Heart left ventricle (tissue), 16 donors: ENCODE measurements at regions of chr15 and their contacts with region 1.

Region 1: DNA sequence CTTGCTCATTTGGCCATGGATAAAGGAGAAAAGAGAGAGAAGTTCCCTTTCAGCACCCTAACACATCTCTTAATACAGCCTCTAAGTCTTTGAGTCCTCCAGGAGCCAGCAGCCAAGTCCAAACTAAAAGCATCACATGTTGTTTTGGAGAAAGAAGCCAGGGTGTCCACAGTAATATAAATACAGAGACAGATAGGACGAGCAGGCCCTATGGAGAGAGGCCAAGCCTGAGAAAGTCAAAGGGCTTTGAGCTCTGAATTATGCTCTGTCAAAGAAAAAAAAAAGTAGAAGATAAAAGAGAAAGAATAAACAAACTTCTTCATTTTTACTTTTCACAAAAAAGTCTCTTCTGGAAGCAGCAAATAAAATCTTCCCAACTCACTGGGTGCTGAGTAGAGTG is 92.4 kb upstream of the THBS1 start:
- DNase-seq: peak in 3 of 5 donors; percentile 50 to 61 (median 56)
- ATAC-seq: peak; percentile 52 to 83 (median 71)
- H3K4me3 ChIP-seq: no peak overlapping the region
- H3K27ac ChIP-seq: peak overlapping the region; percentile 5 to 90 (median 57)
- H3K4me1 ChIP-seq: peaks cover 0 to 66% (median 27%) of the 10 kb centered on the region in 12 donors
- H3K27me3 ChIP-seq: no peaks in the 10 kb centered on the region
- CTCF ChIP-seq: no peak
- POLR2A ChIP-seq: no peak

Region 2: GRCh38 chr15:38164061-38164460 is 1324.5 kb before region 1 on chr15:
- intact Hi-C with region 1: no loop called
- DNase-seq: no peak
- ATAC-seq: no peak
- H3K4me3 ChIP-seq: no peak overlapping the region
- H3K27ac ChIP-seq: no peak overlapping the region
- H3K4me1 ChIP-seq: no peaks in the 10 kb centered on the region
- H3K27me3 ChIP-seq: no peaks in the 10 kb centered on the region
- CTCF ChIP-seq: no peak
- POLR2A ChIP-seq: no peak

Region 3: GRCh38 chr15:39429898-39430357 is 58.6 kb before region 1 on chr15:
- intact Hi-C with region 1: loop called in 5 of 10 experiments (anchors 5 to 10 kb)
- DNase-seq: no peak
- ATAC-seq: no peak
- H3K4me3 ChIP-seq: no peak overlapping the region
- H3K27ac ChIP-seq: peak overlapping the region in 7 of 12 donors; percentile 27 to 70 (median 34)
- H3K4me1 ChIP-seq: peaks cover 0 to 83% (median 37%) of the 10 kb centered on the region in 12 donors
- H3K27me3 ChIP-seq: no peaks in the 10 kb centered on the region
- CTCF ChIP-seq: no peak
- POLR2A ChIP-seq: no peak

Region 4: GRCh38 chr15:39438799-39439592 is 49.5 kb before region 1 on chr15:
- intact Hi-C with region 1: loop called in 5 of 10 experiments (anchors 5 to 10 kb)
- DNase-seq: peak in 1 of 5 donors; percentile 40
- ATAC-seq: peak in 3 of 4 donors; percentile 34 to 43 (median 35)
- H3K4me3 ChIP-seq: no peak overlapping the region
- H3K27ac ChIP-seq: peak overlapping the region in 11 of 12 donors; percentile 31 to 83 (median 62)
- H3K4me1 ChIP-seq: peaks cover 2 to 41% (median 25%) of the 10 kb centered on the region in 12 donors
- H3K27me3 ChIP-seq: no peaks in the 10 kb centered on the region
- CTCF ChIP-seq: no peak
- POLR2A ChIP-seq: no peak